ENCODE measurements at regions of chr6 and their contacts with region 1.

Region 1: GRCh38 chr6:127266178-127266891 is at the start of gene RNF146:
- DNase-seq: peak; percentile 16 to 89
- H3K4me3 ChIP-seq: peak within 1 kb of the TSS; percentile 87 to 91
- H3K27ac ChIP-seq: peak within 1 kb of the TSS; percentile 99 to 100
- H3K4me1 ChIP-seq: peaks cover 0 to 5% of the 10 kb centered on the region in 2 donors
- H3K27me3 ChIP-seq: no peaks in the 10 kb centered on the region
- CTCF ChIP-seq: peak; percentile 49 to 81 (median 78)
- total RNA-seq, gene RNF146: 21.0 TPM

Region 2: DNA sequence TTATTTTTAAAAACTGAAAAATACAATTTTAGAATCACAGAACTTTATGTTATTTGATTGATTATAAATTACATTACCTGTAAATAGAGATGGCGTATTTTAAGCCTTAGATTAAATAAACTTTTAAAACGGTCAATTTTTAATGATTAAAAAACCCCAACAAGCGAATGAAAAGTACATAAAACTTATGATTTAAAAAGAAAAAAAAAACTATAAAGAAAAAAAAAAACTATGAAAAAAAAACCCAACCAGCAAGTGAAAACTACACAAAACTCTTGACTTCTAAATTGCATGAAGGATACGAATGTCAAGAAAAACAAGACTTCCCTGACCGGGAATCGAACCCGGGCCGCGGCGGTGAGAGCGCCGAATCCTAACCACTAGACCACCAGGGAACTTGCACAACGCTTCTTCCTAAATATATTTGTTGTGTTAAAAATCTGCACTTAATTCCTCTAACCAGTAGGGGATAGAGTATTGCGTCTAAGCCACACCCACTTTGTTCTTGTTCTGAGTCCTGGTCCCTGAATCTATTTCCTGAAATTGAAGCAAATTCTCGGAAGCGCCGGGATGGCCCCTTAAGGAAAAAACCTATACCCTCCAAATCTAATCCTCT is 1486.3 kb before region 1 on chr6:
- intact Hi-C with region 1: loop called (anchors 10 kb)
- DNase-seq: peak; percentile 47 to 94
- H3K4me3 ChIP-seq: peak overlapping the region; percentile 56 to 85
- H3K27ac ChIP-seq: peak overlapping the region; percentile 90 to 98
- H3K4me1 ChIP-seq: peaks cover 0 to 6% of the 10 kb centered on the region in 2 donors
- H3K27me3 ChIP-seq: no peaks in the 10 kb centered on the region
- CTCF ChIP-seq: peak in 2 of 3 experiments; percentile 31 to 53

Region 3: DNA sequence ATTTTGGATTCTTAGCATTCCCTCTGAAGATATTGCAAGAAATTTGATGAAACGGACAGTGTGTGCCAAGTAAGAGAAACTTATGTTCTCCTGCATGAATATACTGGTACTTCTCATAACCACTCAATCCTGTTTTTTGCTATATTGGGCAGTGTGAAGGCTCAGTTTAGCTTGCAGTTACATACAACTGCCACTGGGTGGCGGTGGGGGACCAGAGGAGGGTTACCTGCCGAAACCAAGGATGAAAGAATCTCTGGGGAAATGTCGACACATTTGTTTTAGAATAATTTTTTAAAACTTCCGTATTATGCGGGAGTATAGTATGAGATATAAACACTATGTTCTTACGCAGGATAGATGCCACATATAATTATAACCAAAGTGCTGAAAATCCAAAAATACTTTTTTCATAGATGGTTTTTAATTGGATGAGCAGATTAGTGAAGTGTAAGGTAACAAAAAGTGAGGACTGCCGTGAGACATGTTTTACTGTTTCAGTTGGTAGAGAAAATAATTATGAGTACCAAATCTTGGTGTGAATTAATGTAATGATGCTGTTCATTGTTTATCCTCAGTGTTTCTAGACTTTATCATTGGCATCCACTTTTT is 1270.3 kb before region 1 on chr6:
- intact Hi-C with region 1: loop called (anchors 5 kb)
- DNase-seq: no peak
- H3K4me3 ChIP-seq: peak overlapping the region in 1 of 2 donors; percentile 23
- H3K27ac ChIP-seq: no peak overlapping the region
- H3K4me1 ChIP-seq: no peaks in the 10 kb centered on the region
- H3K27me3 ChIP-seq: no peaks in the 10 kb centered on the region
- CTCF ChIP-seq: peak; percentile 59 to 96 (median 96)

Region 4: DNA sequence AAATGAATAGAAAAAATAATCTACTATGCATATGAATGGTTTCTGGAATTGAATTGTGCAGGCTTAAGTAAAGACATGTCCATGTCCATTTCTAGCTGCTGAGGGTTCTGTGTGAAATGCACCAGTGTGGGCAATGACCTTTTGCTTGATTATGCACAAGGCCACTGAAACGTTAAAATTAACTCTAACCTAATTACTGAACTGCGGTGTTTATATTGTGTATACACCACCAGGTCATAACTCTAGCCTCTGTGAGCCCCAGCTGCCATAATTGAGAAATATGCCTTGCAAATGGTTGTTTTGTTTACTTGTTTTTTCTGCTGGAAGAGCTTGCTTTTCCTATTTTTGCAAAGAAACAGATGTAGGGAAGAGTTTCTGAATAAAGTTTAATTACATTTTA is 101.8 kb before region 1 on chr6:
- intact Hi-C with region 1: no loop called
- DNase-seq: no peak
- H3K4me3 ChIP-seq: no peak overlapping the region
- H3K27ac ChIP-seq: no peak overlapping the region
- H3K4me1 ChIP-seq: no peaks in the 10 kb centered on the region
- H3K27me3 ChIP-seq: no peaks in the 10 kb centered on the region
- CTCF ChIP-seq: no peak

Region 5: DNA sequence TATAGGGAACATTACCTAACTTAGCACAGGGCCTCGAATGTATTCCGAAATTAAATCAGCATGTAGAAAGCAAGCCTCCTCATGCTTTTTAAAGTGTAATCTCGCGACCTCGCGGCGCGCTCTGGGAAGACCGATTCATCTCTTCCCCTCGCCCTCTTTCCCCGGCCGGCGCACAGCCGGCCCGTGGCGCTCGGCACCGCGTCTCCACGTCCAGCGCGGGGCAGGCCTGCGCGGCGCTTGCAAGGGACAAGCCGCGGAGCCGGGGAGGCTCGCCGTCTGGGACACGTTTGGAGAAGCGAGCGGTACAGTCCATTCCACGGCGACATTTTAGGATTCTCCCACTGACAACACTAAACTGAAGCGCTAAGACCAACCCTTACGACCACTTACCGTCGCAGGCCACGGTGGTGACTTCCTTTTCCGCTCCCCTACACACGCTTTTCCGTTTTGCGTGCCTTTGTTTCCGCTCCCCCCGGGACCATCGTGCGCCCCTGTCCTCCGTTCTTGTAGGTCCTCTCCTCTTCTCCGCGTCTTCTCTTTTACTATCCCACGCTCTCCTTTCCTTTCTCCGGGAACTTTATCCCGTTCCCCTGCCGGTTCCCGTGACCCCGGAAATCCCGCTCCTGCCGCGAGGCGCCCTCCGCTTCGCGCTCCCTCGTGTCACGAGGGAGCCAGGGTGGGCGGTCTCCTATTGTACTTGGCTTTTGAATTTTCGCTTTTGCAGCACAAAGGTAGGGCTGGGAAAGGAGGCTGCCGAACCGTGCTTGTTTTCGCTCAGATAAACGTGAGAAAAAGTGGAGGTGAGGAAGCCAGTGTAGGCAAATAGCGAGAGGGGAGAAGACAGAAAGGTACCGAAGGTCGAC is 76.8 kb after region 1 on chr6 and contains the start of gene ECHDC1:
- intact Hi-C with region 1: loop called (anchors 5 kb)
- DNase-seq: peak in 1 of 2 donors; percentile 75
- H3K4me3 ChIP-seq: peak within 1 kb of the TSS; percentile 76 to 81
- H3K27ac ChIP-seq: peak within 1 kb of the TSS; percentile 59 to 66
- H3K4me1 ChIP-seq: peaks cover 0 to 16% of the 10 kb centered on the region in 2 donors
- H3K27me3 ChIP-seq: no peaks in the 10 kb centered on the region
- CTCF ChIP-seq: peak in 1 of 3 experiments; percentile 27
- total RNA-seq, gene ECHDC1: 3.3 TPM

Region 6: DNA sequence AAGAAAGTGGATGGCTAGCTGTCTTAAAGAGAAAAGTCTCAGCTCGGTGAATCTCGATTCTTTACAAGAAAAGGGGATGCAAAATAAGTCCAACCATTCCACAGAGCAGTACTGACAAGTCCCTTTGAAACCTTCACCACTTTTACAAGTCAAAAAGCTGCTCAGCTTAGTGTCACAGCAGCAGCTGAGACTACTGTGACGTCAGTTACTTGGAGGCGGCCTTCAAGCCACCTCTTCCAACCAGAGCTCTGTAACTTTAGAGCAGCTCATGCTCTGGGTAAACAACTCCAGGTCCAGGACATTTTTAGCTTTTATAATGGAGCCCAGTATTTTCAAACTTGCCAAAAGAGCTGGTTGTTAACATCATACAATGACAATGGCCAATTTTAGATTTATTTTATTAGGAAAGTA is 192.9 kb after region 1 on chr6 and contains the start of gene KIAA0408:
- intact Hi-C with region 1: loop called (anchors 2 kb)
- DNase-seq: peak in 1 of 2 donors; percentile 88
- H3K4me3 ChIP-seq: peak within 1 kb of the TSS; percentile 40 to 55
- H3K27ac ChIP-seq: peak within 1 kb of the TSS; percentile 65 to 79
- H3K4me1 ChIP-seq: peaks cover 0 to 4% of the 10 kb centered on the region in 2 donors
- H3K27me3 ChIP-seq: no peaks in the 10 kb centered on the region
- CTCF ChIP-seq: no peak
- total RNA-seq, gene KIAA0408: not detected

Measured in ascending aorta (tissue), 2 donors.